Calu3 (cell line): ENCODE measurements at regions of chr7 and their contacts with region 1.

Region 1: GRCh38 chr7:146772601-146773000 is 656.0 kb downstream of the CNTNAP2 start:
- DNase-seq: no peak
- H3K4me3 Mint-ChIP-seq: no peak overlapping the region
- H3K27ac Mint-ChIP-seq: no peak overlapping the region
- H3K4me1 Mint-ChIP-seq: no peaks in the 10 kb centered on the region
- H3K27me3 Mint-ChIP-seq: no peaks in the 10 kb centered on the region
- CTCF ChIP-seq: no peak

Region 2: GRCh38 chr7:146722986-146723385 is 49.6 kb before region 1 on chr7:
- CTCF ChIA-PET with region 1: no interaction called
- intact Hi-C with region 1: loop called (anchors 1 kb)
- DNase-seq: no peak
- H3K4me3 Mint-ChIP-seq: no peak overlapping the region
- H3K27ac Mint-ChIP-seq: no peak overlapping the region
- H3K4me1 Mint-ChIP-seq: no peaks in the 10 kb centered on the region
- H3K27me3 Mint-ChIP-seq: no peaks in the 10 kb centered on the region
- CTCF ChIP-seq: no peak